MCF 10A (cell line): ENCODE measurements at regions of chr1 and their contacts with region 1.

Region 1: GRCh38 chr1:22052115-22053016 is at the start of gene CDC42:
- DNase-seq: peak; percentile 96
- H3K4me3 Mint-ChIP-seq: peak within 1 kb of the TSS; percentile 89
- H3K27ac Mint-ChIP-seq: peak within 1 kb of the TSS; percentile 93
- H3K4me1 Mint-ChIP-seq: peaks cover 15% of the 10 kb centered on the region
- H3K27me3 Mint-ChIP-seq: no peaks in the 10 kb centered on the region
- CTCF ChIP-seq: no peak
- total RNA-seq, gene CDC42: 133 and 141 TPM in 2 replicates

Region 2: GRCh38 chr1:21919520-21919919 is 132.8 kb before region 1 on chr1:
- CTCF ChIA-PET with region 1: no interaction called
- POLR2A ChIA-PET with region 1: no interaction called
- intact Hi-C with region 1: no loop called
- DNase-seq: peak; percentile 50
- H3K4me3 Mint-ChIP-seq: no peak overlapping the region
- H3K27ac Mint-ChIP-seq: no peak overlapping the region
- H3K4me1 Mint-ChIP-seq: peaks cover 12% of the 10 kb centered on the region
- H3K27me3 Mint-ChIP-seq: no peaks in the 10 kb centered on the region
- CTCF ChIP-seq: no peak

Region 3: GRCh38 chr1:21956720-21957552 is 95.4 kb before region 1 on chr1:
- CTCF ChIA-PET with region 1: no interaction called
- POLR2A ChIA-PET with region 1: interaction called, 18 read pairs
- intact Hi-C with region 1: no loop called
- DNase-seq: peak; percentile 99
- H3K4me3 Mint-ChIP-seq: peak overlapping the region; percentile 63
- H3K27ac Mint-ChIP-seq: peak overlapping the region; percentile 83
- H3K4me1 Mint-ChIP-seq: peaks cover 18% of the 10 kb centered on the region
- H3K27me3 Mint-ChIP-seq: no peaks in the 10 kb centered on the region
- CTCF ChIP-seq: no peak

Region 4: GRCh38 chr1:22025368-22026155 is 26.8 kb before region 1 on chr1:
- CTCF ChIA-PET with region 1: interaction called, 5 read pairs
- POLR2A ChIA-PET with region 1: interaction called, 111 read pairs
- intact Hi-C with region 1: no loop called
- DNase-seq: peak; percentile 88
- H3K4me3 Mint-ChIP-seq: peak overlapping the region; percentile 79
- H3K27ac Mint-ChIP-seq: peak overlapping the region; percentile 93
- H3K4me1 Mint-ChIP-seq: peaks cover 13% of the 10 kb centered on the region
- H3K27me3 Mint-ChIP-seq: no peaks in the 10 kb centered on the region
- CTCF ChIP-seq: no peak

Region 5: GRCh38 chr1:22039594-22040285 is 12.6 kb before region 1 on chr1:
- CTCF ChIA-PET with region 1: interaction called, 6 read pairs
- POLR2A ChIA-PET with region 1: interaction called, 21 read pairs
- intact Hi-C with region 1: no loop called
- DNase-seq: peak; percentile 55
- H3K4me3 Mint-ChIP-seq: no peak overlapping the region
- H3K27ac Mint-ChIP-seq: no peak overlapping the region
- H3K4me1 Mint-ChIP-seq: peaks cover 21% of the 10 kb centered on the region
- H3K27me3 Mint-ChIP-seq: no peaks in the 10 kb centered on the region
- CTCF ChIP-seq: no peak

Region 6: GRCh38 chr1:22074803-22075202 is 22.4 kb after region 1 on chr1:
- CTCF ChIA-PET with region 1: no interaction called
- POLR2A ChIA-PET with region 1: interaction called, 97 read pairs
- intact Hi-C with region 1: no loop called
- DNase-seq: no peak
- H3K4me3 Mint-ChIP-seq: no peak overlapping the region
- H3K27ac Mint-ChIP-seq: peak overlapping the region; percentile 7
- H3K4me1 Mint-ChIP-seq: peaks cover 33% of the 10 kb centered on the region
- H3K27me3 Mint-ChIP-seq: no peaks in the 10 kb centered on the region
- CTCF ChIP-seq: no peak

Region 7: GRCh38 chr1:22098752-22099151 is 46.4 kb after region 1 on chr1:
- CTCF ChIA-PET with region 1: interaction called, 3 read pairs
- POLR2A ChIA-PET with region 1: interaction called, 10 read pairs
- intact Hi-C with region 1: no loop called
- DNase-seq: no peak
- H3K4me3 Mint-ChIP-seq: no peak overlapping the region
- H3K27ac Mint-ChIP-seq: no peak overlapping the region
- H3K4me1 Mint-ChIP-seq: no peaks in the 10 kb centered on the region
- H3K27me3 Mint-ChIP-seq: no peaks in the 10 kb centered on the region
- CTCF ChIP-seq: no peak